Activated CD8-positive, alpha-beta T cell treated with anti-CD3 and anti-CD28 coated beads for 36 hours (primary cell): ENCODE measurements at regions of chr22 and their contacts with region 1.

Region 1: GRCh38 chr22:26597026-26597425 is 7.1 kb upstream of the TPST2 start:
- DNase-seq: peak; percentile 79
- ATAC-seq: peak; percentile 61
- H3K4me3 Mint-ChIP-seq: no peak overlapping the region
- H3K27ac Mint-ChIP-seq: peak overlapping the region; percentile 60
- H3K4me1 Mint-ChIP-seq: peaks cover 57% of the 10 kb centered on the region
- H3K27me3 Mint-ChIP-seq: no peaks in the 10 kb centered on the region
- CTCF ChIP-seq: no peak

Region 2: DNA sequence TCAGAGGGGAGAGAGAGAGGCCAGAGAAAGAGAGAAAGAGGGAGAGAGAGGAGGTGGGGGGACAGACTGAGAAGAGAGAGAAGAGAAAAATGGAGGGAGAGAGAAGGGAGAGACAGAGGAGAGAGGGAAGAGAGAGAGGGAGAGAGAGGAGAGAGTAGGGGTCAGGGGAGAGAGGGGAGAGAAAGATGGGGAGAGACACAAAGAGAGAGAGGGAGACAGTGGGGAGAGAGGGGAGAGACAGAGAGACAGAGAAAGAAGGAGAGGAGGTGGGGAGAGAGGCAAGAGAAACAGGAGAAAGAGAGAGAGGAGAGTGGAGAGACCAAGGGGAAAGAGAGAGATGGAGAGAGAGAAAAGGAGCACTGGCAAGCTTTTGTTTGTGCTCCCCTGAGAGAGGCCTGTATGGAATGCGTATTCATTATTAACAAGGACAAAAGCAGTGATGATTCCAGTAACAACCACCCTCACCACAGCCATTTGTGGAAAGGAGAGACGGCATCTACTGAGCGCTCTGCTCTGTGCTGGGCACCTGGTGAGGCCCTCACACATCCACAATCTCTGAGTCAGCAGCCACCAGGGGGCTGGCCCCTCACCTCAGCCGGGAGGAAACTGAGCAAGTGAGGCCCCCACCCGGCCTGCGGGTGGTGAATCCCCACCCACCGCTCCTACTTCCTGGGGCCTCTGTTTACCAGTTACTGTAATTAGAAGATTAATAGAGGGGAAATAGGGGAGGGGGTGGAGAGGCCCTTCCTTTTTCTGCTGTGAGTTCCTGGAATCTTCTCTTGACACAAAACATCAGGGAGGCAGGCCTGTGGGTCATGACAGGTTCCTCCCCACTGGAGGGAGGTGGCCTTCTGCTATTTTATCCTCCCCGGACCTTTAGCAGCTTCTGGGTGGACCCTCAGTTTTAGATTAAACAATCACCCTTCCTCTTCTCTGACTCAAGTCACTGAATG is 45.7 kb after region 1 on chr22:
- CTCF ChIA-PET with region 1: interaction called, 4 read pairs
- POLR2A ChIA-PET with region 1: interaction called, 12 read pairs
- intact Hi-C with region 1: no loop called
- DNase-seq: peak; percentile 95
- ATAC-seq: peak; percentile 92
- H3K4me3 Mint-ChIP-seq: peak overlapping the region; percentile 65
- H3K27ac Mint-ChIP-seq: peak overlapping the region; percentile 96
- H3K4me1 Mint-ChIP-seq: peaks cover 72% of the 10 kb centered on the region
- H3K27me3 Mint-ChIP-seq: no peaks in the 10 kb centered on the region
- CTCF ChIP-seq: peak; percentile 47